H1 (cell line): ENCODE measurements at regions of chr9 and their contacts with region 1.

Region 1: DNA sequence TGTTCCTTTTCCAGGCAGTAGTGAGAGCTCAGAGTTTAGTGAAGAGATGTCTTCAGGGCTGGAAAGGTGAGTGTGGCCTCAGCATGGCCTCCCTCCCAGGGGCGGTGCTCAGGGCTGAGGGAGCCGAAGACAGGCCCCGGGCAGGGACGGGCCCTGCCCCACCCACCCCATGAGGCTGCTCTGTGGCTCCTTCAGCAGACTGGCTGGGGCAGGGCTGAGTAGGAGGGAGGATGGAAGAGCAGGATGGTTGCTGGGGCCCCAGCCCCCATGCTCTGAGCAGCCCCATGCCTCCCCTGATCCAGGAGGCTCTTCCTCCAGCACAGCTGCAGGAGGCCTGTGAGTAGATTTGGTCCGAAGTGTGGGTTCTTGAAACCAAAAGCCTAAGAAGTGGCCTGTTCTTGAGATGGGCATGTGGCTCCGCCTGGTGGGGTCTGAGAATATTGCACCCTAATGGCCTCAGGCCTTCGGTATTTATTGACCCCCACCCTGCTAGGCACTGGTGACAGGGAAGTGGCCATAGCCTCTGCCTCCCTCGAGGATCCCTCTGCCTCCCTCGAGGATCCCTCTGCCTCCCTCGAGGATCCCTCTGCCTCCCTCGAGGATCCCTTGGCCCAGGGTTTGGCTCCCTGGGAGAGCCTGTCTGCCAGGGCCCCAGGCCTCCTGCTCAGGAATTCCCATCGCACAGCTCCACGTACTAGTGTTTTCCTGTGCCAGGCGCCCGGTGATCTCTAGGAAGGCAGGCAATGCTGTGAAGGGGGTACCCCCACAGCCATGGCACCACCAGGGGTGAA is 65.4 kb upstream of the GARNL3 start:
- DNase-seq: peak; percentile 77 to 98
- H3K4me3 ChIP-seq: no peak overlapping the region
- H3K27ac ChIP-seq: no peak overlapping the region
- H3K4me1 ChIP-seq: peaks cover 0 to 4% (median under 1%) of the 10 kb centered on the region in 4 experiments; a peak in 4 of 7 replicates
- H3K27me3 ChIP-seq: no peaks in the 10 kb centered on the region
- CTCF ChIP-seq: peak; percentile 79 to 94 (median 93)
- EP300 ChIP-seq: no peak
- POLR2A ChIP-seq: no peak
- RAD21 ChIP-seq: peak; percentile 97 to 99

Region 2: GRCh38 chr9:126932871-126933321 is 266.3 kb before region 1 on chr9:
- CTCF ChIA-PET with region 1: interaction called, 166 read pairs
- POLR2A ChIA-PET with region 1: interaction called, 4 read pairs
- DNase-seq: no peak
- H3K4me3 ChIP-seq: no peak overlapping the region
- H3K27ac ChIP-seq: no peak overlapping the region
- H3K4me1 ChIP-seq: peaks cover 0 to 13% (median 7%) of the 10 kb centered on the region in 4 experiments; a peak in 5 of 7 replicates
- H3K27me3 ChIP-seq: no peaks in the 10 kb centered on the region
- CTCF ChIP-seq: peak in 2 of 3 experiments; percentile 25; a peak in 2 of 4 replicates
- EP300 ChIP-seq: no peak
- POLR2A ChIP-seq: no peak
- RAD21 ChIP-seq: peak; percentile 23 to 39; a peak in 3 of 4 replicates

Region 3: DNA sequence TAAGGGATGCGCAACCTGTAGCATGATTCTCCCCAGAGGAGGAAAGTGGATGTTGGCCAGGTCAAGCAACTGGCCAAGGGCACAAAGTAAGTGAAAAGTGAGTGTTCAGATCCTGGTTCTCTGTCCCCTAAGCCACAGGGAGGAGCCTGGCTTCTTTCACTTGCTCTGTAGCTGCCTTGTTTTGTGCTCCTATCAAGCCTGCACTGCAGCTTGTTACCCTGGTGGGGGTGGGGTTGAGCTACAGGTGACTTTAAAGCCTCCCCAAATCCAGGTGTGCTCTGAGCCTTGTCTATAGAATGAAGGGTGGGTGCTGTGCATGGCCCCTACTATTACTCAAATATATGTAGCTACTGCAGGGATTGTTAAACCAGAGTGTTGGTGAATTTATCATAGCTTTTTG is 251.7 kb before region 1 on chr9:
- CTCF ChIA-PET with region 1: interaction called, 166 read pairs
- POLR2A ChIA-PET with region 1: no interaction called
- DNase-seq: peak in 1 of 2 experiments; percentile 17
- H3K4me3 ChIP-seq: no peak overlapping the region
- H3K27ac ChIP-seq: no peak overlapping the region
- H3K4me1 ChIP-seq: peaks cover 0 to 3% (median 0%) of the 10 kb centered on the region in 4 experiments; a peak in 1 of 7 replicates
- H3K27me3 ChIP-seq: no peaks in the 10 kb centered on the region
- CTCF ChIP-seq: peak; percentile 58 to 82 (median 77)
- EP300 ChIP-seq: no peak; a peak in 1 of 3 replicates
- POLR2A ChIP-seq: no peak
- RAD21 ChIP-seq: peak; percentile 82 to 85

Region 4: DNA sequence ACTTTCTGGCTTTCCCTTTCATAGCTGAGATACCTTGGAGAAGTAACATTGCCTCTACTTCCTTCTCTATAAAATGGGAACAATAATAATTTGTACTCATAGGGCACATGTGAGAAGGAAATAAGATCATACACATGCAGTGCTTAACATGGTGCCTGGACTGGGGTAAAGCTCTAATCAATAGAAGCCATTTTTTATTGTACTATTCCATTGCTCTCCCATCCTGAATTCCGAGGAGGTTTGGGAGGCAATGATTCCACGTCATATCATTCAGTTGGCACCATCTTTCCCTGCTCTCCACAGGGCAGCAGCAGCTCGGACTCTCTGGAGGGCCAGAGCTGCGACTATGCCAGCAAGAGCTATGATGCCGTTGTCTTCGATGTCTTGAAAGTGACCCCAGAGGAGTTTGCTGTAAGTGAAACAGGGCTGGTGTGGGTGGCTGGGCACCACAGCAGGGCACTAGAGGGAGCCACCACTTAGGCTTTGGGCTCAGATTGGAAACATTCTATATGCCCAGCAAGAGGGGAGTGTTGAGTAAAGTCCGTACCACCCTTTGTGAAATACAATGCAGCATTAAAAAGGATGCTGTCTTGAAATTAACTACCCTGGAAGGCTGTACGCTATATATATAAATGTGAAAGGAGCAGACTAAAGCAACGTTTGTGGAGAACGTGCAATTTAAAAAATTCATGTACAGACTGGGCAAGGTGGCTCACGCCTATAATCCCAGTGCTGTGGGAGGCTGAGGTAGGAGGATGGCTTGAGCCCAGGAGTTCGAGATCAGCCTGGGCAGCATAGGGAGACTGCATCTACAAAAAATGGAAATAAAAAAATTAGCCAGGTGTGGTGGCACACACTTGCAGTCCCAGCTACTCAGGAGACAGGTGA is 233.4 kb before region 1 on chr9:
- CTCF ChIA-PET with region 1: interaction called, 168 read pairs
- POLR2A ChIA-PET with region 1: no interaction called
- DNase-seq: peak; percentile 33 to 60
- H3K4me3 ChIP-seq: no peak overlapping the region
- H3K27ac ChIP-seq: no peak overlapping the region
- H3K4me1 ChIP-seq: peaks cover 0 to 8% (median under 1%) of the 10 kb centered on the region in 4 experiments; a peak in 4 of 7 replicates
- H3K27me3 ChIP-seq: no peaks in the 10 kb centered on the region
- CTCF ChIP-seq: peak; percentile 81 to 97 (median 92)
- EP300 ChIP-seq: no peak
- POLR2A ChIP-seq: no peak
- RAD21 ChIP-seq: peak; percentile 92 to 93

Region 5: GRCh38 chr9:127159325-127159801 is 39.8 kb before region 1 on chr9:
- CTCF ChIA-PET with region 1: interaction called, 29 read pairs
- POLR2A ChIA-PET with region 1: interaction called, 3 read pairs
- DNase-seq: peak; percentile 17 to 66
- H3K4me3 ChIP-seq: no peak overlapping the region
- H3K27ac ChIP-seq: no peak overlapping the region
- H3K4me1 ChIP-seq: peaks cover 3 to 9% (median 6%) of the 10 kb centered on the region in 4 experiments
- H3K27me3 ChIP-seq: no peaks in the 10 kb centered on the region
- CTCF ChIP-seq: peak; percentile 50 to 66 (median 65)
- EP300 ChIP-seq: no peak
- POLR2A ChIP-seq: no peak
- RAD21 ChIP-seq: peak; percentile 60 to 66

Region 6: GRCh38 chr9:127187231-127187956 is 11.8 kb before region 1 on chr9:
- CTCF ChIA-PET with region 1: interaction called, 22 read pairs
- POLR2A ChIA-PET with region 1: no interaction called
- DNase-seq: no peak
- H3K4me3 ChIP-seq: no peak overlapping the region
- H3K27ac ChIP-seq: no peak overlapping the region
- H3K4me1 ChIP-seq: peaks cover 0 to 6% (median under 1%) of the 10 kb centered on the region in 4 experiments; a peak in 3 of 7 replicates
- H3K27me3 ChIP-seq: no peaks in the 10 kb centered on the region
- CTCF ChIP-seq: no peak
- EP300 ChIP-seq: no peak
- POLR2A ChIP-seq: no peak
- RAD21 ChIP-seq: no peak